ENCODE measurements at regions of chr16 and their contacts with region 1.

Region 1: DNA sequence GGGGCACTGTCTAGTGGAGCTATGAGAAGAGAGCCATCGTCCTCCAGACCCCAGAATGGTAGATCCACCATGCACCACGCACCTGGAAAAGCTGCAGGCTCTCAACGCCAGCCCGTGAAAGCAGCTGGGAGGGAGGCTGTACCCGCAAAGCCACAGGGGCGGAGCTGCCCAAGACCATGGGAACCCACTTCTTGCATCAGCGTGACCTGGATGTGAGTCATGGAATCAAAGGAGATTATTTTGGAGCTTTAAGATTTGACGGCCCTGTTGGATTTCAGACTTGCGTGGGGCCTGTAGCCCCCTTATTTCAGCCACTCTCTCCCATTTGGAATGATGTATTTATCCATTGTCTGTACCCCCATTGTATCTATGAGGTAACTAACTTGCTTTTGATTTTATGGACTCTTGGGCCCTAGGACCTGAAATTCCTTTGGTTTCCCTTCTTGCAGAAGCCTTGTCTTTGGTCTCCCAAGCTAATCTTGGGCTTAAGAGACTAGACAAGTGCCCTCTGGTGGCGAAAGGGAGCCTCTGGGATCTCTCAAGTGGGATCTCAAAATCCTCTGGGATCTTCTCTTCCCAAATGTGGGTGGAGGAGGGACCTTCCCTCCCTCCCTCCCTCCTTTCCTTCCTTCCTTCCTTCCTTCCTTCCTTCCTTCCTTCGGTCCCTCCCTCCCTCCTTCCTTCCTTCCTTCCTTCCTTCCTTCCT is 58.2 kb upstream of the HAPSTR1 start:
- DNase-seq: peak; percentile 54
- H3K4me3 Mint-ChIP-seq: no peak overlapping the region
- H3K27ac Mint-ChIP-seq: no peak overlapping the region
- H3K4me1 Mint-ChIP-seq: no peaks in the 10 kb centered on the region
- H3K27me3 Mint-ChIP-seq: no peaks in the 10 kb centered on the region
- CTCF ChIP-seq: peak; percentile 52

Region 2: DNA sequence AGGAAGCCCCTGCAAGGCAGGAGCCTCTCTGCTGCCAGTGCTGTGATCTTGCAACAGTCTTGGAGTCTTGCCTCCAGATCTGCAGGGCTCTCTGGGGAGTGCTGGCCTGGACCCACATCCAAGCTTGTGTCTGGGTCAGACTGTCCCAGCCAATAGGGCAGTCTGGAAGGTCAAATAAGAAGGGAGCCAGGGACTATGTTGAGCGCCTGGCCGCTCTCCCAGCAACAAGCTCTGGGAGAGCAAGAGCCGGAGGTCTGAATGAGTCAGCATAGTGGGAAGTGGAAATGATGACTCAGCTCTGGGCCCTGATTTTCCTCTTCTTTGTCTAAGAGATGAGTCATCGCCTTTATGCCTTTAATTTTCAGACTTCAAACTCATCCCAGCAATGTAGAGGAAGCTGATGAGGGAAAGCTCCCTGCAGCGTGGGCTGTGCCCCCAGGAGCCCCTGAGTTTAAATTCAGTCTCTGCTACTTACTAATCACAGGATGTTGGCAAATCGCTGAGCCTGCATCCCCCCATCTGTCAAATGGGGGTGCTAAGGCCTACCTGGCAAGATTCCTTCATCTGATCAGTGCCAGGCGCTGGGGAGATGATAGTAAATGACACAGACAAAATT is 14.5 kb after region 1 on chr16:
- CTCF ChIA-PET with region 1: interaction called, 10 read pairs
- intact Hi-C with region 1: no loop called
- DNase-seq: peak; percentile 84
- H3K4me3 Mint-ChIP-seq: peak overlapping the region; percentile 16
- H3K27ac Mint-ChIP-seq: peak overlapping the region; percentile 72
- H3K4me1 Mint-ChIP-seq: peaks cover 23% of the 10 kb centered on the region
- H3K27me3 Mint-ChIP-seq: no peaks in the 10 kb centered on the region
- CTCF ChIP-seq: no peak

Region 3: DNA sequence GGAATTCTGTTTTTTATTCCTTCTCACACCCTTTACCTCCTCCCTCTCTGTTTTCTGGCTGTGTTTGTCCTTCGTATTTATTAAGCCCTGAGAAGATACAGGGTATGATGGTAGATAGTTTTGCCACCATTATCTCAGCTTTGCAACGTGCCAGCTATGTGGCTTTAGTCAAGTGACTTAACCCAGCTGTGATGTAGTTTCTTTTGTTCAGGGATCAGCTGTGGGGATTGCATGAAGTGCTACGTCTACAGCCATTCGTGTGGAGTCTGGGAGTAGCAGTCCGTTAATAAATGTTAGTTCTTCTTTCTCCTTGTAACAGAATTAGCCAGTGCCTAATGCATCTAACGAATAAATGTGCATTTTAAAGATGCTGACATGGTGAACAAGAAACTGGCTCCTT is 186.5 kb after region 1 on chr16:
- CTCF ChIA-PET with region 1: no interaction called
- intact Hi-C with region 1: no loop called
- DNase-seq: no peak
- H3K4me3 Mint-ChIP-seq: no peak overlapping the region
- H3K27ac Mint-ChIP-seq: no peak overlapping the region
- H3K4me1 Mint-ChIP-seq: no peaks in the 10 kb centered on the region
- H3K27me3 Mint-ChIP-seq: peaks cover 82% of the 10 kb centered on the region
- CTCF ChIP-seq: no peak